Breast epithelium (tissue), 4 donors: ENCODE measurements at regions of chr5 and their contacts with region 1.

Region 1: DNA sequence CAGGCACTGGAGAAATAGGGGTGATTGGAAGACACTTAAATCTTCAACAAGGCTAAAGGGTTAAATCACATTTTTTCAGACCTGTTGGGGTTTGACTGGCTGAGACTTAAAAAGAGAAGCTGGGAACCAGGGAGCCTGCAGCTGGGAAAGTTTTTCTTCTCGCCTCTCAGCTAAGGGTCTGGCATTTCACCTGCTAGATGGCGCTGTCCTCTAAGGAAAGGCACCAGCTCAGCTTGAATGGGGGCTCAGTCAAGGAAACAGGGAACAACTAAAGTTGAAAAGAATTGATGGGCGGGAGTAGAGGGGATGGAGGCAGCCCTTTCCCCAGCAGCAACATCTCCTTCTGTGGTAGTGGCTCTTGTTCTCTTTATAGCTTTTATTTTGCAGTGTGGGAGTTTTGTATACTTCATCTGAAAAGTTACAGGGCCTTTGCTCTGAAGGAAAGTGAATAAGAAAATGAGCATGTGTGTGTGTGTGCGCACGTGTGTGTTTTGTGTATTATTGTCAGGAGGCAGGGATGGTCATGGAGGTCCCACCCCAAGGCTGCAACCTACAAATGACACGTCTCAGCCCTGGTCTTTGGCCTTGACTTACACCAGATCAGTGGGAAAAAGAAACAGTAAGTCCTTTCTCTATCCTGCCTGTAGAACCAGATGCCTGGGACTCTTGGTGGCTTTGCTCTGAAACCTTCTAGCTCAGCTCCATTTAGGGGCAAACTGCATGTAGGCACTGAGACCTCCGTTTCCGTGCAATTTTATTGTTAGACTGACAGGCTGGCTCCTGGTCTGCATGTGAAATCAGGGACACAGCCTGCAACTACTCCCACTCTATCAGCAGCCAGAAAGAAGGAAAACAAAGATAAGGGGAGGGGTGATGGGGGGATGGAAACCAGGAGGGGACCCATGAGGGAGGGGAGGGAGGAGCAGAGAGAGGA is 316.2 kb upstream of the CLINT1 start:
- DNase-seq: peak in 1 of 2 donors; percentile 41
- H3K4me3 ChIP-seq: no peak overlapping the region
- H3K27ac ChIP-seq: peak overlapping the region in 1 of 2 donors; percentile 43
- H3K4me1 ChIP-seq: peaks cover 0 to 6% of the 10 kb centered on the region in 2 donors
- H3K27me3 ChIP-seq: no peaks in the 10 kb centered on the region
- CTCF ChIP-seq: peak; percentile 20 to 82 (median 48)
- POLR2A ChIP-seq: no peak

Region 2: DNA sequence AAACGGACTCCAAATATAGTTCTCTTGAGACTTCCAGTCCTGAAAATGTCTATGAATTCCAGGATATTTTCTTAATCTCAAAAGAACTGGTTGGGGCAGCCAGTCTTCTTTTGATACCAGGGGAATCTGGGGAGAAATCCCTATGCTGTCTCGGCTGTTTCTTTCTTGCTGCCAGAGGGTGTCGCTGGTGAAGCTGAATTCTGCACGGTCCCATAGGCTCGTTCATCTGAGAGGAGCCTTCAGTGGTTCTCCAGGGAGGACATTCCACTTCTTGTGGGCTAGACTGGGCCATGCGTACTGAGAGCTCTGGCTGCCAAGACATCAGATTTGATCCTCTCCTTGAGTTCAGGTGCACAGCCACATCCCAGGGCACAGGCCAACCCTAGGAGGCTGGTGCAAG is 161.2 kb before region 1 on chr5:
- intact Hi-C with region 1: no loop called
- DNase-seq: no peak
- H3K4me3 ChIP-seq: no peak overlapping the region
- H3K27ac ChIP-seq: no peak overlapping the region
- H3K4me1 ChIP-seq: no peaks in the 10 kb centered on the region
- H3K27me3 ChIP-seq: no peaks in the 10 kb centered on the region
- CTCF ChIP-seq: peak in 1 of 3 donors; percentile 8
- POLR2A ChIP-seq: no peak

Region 3: DNA sequence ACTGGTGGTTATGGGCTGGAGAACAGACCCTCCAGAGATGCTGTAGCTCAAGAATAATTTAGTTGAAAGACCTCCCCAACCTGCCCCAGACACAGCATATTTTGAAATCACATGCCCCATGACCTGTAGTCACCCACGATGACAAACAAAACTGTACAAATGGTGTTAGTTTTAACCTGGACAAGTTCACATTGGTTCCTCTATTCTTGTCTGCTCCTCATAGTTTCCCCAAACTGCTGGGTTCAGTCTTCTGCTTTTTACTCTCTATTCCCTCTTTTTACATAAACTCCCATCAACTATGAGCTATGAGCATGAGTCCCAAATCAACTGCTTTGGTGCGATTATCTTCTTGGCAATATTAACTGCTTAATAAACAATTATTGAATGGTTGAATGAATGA is 49.1 kb after region 1 on chr5:
- intact Hi-C with region 1: no loop called
- DNase-seq: no peak
- H3K4me3 ChIP-seq: no peak overlapping the region
- H3K27ac ChIP-seq: peak overlapping the region in 1 of 2 donors; percentile 1
- H3K4me1 ChIP-seq: no peaks in the 10 kb centered on the region
- H3K27me3 ChIP-seq: no peaks in the 10 kb centered on the region
- CTCF ChIP-seq: no peak
- POLR2A ChIP-seq: no peak

Region 4: GRCh38 chr5:159106569-159107282 is 931.5 kb after region 1 on chr5:
- intact Hi-C with region 1: loop called (anchors 10 kb)
- DNase-seq: no peak
- H3K4me3 ChIP-seq: peak overlapping the region; percentile 27 to 60 (median 41)
- H3K27ac ChIP-seq: peak overlapping the region in 1 of 2 donors; percentile 52
- H3K4me1 ChIP-seq: no peaks in the 10 kb centered on the region
- H3K27me3 ChIP-seq: peaks cover 0 to 58% of the 10 kb centered on the region in 2 donors
- CTCF ChIP-seq: peak; percentile 44 to 95 (median 83)
- POLR2A ChIP-seq: no peak